Mammary epithelial cell (primary cell): ENCODE measurements at regions of chr6 and their contacts with region 1.

Region 1: DNA sequence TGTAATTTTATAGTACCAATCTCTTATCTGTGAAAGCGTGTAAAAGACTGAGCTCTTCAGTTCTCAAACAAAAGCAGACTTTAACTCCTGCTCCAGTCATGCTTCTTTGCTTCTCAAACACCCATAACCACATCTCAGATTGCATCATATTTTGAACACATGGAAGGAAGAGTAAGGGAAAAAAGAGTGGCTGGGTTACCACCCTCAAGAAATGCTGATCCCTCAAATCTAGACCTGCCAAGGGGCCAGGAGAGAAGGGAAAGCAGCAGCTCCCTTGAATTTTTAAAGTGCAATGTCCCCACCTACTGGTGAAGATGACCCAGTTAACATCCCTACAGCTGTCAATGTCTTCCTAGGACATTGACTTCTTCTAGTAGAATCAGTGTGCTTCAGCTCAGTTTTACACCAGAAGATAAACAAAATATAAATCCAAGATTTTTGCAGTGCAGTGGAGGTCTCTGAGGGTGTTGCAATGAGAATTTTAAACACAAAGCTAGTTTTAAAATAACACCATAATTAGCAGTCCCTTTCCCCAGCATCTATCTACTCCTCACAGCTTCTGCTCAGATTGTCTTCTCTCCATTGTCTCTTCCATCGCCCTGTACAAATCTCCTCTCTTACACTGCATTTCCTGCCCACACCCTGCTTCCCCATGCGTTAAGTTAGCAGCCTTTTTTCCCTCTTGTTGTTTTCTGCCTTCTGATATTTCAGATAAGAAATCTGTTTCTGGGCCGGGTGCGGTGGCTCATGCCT is 22.6 kb upstream of the HLA-DQB2 start:
- DNase-seq: peak; percentile 57
- H3K4me3 ChIP-seq: no peak overlapping the region
- H3K27ac ChIP-seq: no peak overlapping the region
- H3K4me1 ChIP-seq: peaks cover 7% of the 10 kb centered on the region
- H3K27me3 ChIP-seq: no peaks in the 10 kb centered on the region
- CTCF ChIP-seq: peak; percentile 61 to 73

Region 2: DNA sequence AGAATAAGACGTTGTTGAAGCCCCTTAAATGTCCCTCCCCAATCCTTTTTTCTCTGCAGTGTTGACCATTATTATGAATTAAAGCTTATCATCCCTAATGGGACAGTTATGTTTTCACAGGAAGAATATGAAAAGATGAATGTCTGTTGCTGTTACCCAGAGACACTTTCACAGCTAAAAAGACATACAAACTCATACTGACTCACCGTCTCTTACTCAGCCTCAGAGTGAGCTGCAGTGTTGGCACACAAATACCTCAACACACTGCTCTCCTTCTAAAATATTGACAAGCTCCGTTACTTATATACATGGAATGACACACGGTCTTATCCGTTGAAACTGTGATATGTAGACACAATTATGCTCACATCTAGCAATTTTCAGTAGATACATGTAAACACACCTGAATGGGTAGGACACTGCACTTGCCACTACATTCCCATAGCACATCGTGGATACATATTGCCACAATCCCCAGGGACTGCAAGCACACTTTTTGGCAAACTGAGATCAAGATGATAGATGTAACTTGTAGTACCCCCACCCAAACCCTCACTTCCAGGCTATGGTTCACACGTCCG is 1033.1 kb before region 1 on chr6:
- CTCF ChIA-PET with region 1: no interaction called
- dilution Hi-C with region 1: no loop called
- in situ Hi-C with region 1: no loop called
- intact Hi-C with region 1: no loop called
- DNase-seq: peak; percentile 52
- H3K4me3 ChIP-seq: no peak overlapping the region
- H3K27ac ChIP-seq: no peak overlapping the region
- H3K4me1 ChIP-seq: no peaks in the 10 kb centered on the region
- H3K27me3 ChIP-seq: no peaks in the 10 kb centered on the region
- CTCF ChIP-seq: no peak

Region 3: DNA sequence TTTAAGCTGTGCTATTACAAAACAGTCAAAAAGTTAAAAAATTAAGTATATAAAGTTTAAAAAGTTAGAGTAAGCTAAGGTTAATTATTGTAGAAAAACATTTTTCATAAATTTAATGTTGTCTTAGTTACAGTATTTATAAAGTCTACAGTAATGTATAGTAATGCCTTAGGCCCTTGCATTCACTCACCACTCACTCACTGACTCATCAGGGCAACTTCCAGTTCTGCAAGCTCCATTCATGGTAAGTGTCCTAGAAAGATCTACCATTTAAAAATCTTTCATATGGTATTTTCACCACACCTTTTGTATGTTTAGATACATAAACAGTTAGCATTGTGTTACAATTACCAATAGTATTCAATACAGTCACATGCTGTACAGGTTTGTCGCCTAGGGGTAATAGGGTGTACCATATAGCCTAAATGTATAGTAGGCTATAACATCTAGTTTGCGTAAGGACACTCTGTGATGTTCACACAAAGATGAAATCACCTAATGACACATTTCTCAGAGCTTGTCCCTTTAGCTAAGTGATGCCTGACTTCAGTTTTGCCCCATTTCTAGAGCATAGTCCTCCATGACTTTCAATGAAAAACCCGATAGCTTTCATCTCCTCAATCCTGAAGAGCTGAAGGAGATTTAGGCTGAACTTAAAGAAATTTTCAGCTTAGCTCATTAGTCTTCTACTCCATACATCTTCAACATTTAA is 361.2 kb before region 1 on chr6:
- CTCF ChIA-PET with region 1: no interaction called
- dilution Hi-C with region 1: no loop called
- in situ Hi-C with region 1: loop called in 1 of 2 experiments (anchors 10 kb)
- intact Hi-C with region 1: no loop called
- DNase-seq: peak; percentile 62
- H3K4me3 ChIP-seq: no peak overlapping the region
- H3K27ac ChIP-seq: no peak overlapping the region
- H3K4me1 ChIP-seq: peaks cover 4% of the 10 kb centered on the region
- H3K27me3 ChIP-seq: peaks cover 3% of the 10 kb centered on the region
- CTCF ChIP-seq: no peak

Region 4: GRCh38 chr6:32432050-32432450 is 353.9 kb before region 1 on chr6:
- CTCF ChIA-PET with region 1: interaction called, 3 read pairs
- dilution Hi-C with region 1: no loop called
- in situ Hi-C with region 1: loop called in 1 of 2 experiments (anchors 10 kb)
- intact Hi-C with region 1: loop called (anchors 1 kb)
- DNase-seq: no peak
- H3K4me3 ChIP-seq: no peak overlapping the region
- H3K27ac ChIP-seq: no peak overlapping the region
- H3K4me1 ChIP-seq: no peaks in the 10 kb centered on the region
- H3K27me3 ChIP-seq: peaks cover 2% of the 10 kb centered on the region
- CTCF ChIP-seq: peak; percentile 19 to 45

Region 5: DNA sequence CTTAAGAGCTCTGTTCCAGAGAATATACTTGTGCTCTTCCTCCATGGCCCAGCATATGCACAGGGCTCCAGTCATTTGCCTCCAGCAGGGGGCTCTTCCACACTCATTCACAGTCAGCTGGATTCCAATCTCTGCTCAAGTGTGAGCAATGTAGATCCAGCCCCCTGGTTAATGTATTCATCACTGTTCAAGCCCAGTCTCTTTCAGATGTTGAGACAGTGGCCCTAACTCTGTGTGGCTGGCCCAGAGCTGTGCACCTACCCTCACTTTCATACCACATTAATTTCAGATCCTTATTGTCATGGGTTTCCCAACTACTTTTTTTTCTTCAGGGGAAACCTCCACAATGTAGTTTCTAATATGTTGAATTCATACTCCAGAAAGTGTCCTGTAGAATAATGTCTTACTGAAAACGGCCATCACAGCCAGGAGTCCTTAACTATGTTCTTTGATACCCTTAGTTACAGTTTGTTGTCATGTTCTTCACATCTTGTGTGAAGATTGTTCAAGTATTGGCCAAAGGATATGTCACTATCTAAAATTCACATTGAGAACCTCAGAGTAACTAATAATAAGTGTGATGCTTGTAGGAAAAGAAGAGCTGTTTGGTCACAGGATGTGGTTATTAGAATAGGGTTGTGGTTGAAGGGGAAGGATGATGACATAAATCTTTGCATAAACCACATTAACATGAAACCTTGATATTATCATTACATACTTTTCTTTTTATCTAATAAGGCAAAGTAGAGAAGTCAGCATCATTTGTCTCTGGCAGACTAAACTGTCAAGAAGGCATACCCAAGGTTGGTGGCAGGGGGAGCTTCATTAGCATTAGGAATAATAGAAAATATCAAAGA is 163.2 kb before region 1 on chr6:
- CTCF ChIA-PET with region 1: no interaction called
- dilution Hi-C with region 1: no loop called
- in situ Hi-C with region 1: no loop called
- intact Hi-C with region 1: loop called (anchors 2 kb)
- DNase-seq: peak; percentile 83
- H3K4me3 ChIP-seq: no peak overlapping the region
- H3K27ac ChIP-seq: peak overlapping the region; percentile 19
- H3K4me1 ChIP-seq: peaks cover 12% of the 10 kb centered on the region
- H3K27me3 ChIP-seq: no peaks in the 10 kb centered on the region
- CTCF ChIP-seq: peak; percentile 25 to 52

Region 6: DNA sequence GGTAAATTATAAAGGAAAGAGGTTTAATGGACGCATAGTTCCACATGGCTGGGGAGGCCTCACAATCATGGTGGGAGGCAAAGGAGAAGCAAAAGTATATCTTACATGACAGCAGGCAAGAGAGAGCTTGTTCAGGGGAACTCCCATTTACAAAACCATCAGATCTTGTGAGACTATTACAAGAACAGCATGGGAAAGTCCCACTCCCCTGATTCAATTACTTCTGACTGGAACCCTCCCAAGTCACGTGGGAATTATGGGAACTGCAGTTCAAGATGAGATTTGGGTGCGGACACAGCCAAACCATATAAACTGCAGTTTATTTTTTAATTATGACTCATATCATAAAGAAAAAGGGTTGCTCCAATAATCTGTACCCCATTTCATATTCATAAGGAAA is 67.1 kb before region 1 on chr6:
- CTCF ChIA-PET with region 1: no interaction called
- dilution Hi-C with region 1: no loop called
- in situ Hi-C with region 1: loop called in 1 of 2 experiments (anchors 10 kb)
- intact Hi-C with region 1: no loop called
- DNase-seq: peak; percentile 47
- H3K4me3 ChIP-seq: no peak overlapping the region
- H3K27ac ChIP-seq: no peak overlapping the region
- H3K4me1 ChIP-seq: no peaks in the 10 kb centered on the region
- H3K27me3 ChIP-seq: peaks cover 3% of the 10 kb centered on the region
- CTCF ChIP-seq: no peak